T-cell (primary cell): ENCODE measurements at regions of chr11 and their contacts with region 1.

Region 1: GRCh38 chr11:3849297-3849874 is 6.1 kb upstream of the STIM1 start:
- DNase-seq: peak in 16 of 35 experiments; percentile 31 to 82 (median 46)
- ATAC-seq: peak; percentile 49 to 68 (median 64)
- H3K4me3 ChIP-seq: no peak overlapping the region
- H3K4me3 Mint-ChIP-seq: no peak overlapping the region
- H3K27ac ChIP-seq: no peak overlapping the region
- H3K27ac Mint-ChIP-seq: peak overlapping the region; percentile 19 to 23
- H3K4me1 ChIP-seq: peaks cover 25 to 37% of the 10 kb centered on the region in 2 experiments
- H3K4me1 Mint-ChIP-seq: peaks cover 41 to 58% (median 42%) of the 10 kb centered on the region in 3 donors
- H3K27me3 ChIP-seq: no peaks in the 10 kb centered on the region
- H3K27me3 Mint-ChIP-seq: no peaks in the 10 kb centered on the region

Region 2: DNA sequence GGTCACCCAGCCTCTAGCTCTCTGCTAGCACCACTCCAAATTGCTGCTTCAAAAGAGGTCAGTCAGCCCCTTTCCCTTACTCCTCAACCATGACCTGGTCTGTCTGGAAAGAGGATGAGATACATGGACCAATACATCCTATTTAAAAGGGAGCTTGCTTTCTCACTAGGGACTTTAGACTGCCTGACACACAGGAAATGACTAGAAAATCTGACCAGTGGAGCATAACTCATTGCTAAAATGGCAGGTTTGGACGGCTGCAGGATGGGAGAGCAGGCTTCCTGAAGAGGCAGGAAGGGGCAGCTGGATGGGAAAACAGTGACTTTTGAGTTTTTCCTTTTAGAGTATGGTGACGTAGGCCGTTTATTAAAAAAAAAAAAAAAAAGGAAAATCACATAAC is 31.3 kb after region 1 on chr11:
- CTCF ChIA-PET with region 1: interaction called, 9 to 27 read pairs
- POLR2A ChIA-PET with region 1: interaction called in 1 of 2 experiments, 4 read pairs
- DNase-seq: no peak
- ATAC-seq: no peak
- H3K4me3 ChIP-seq: no peak overlapping the region
- H3K4me3 Mint-ChIP-seq: peak overlapping the region in 2 of 3 donors; percentile 21 to 44
- H3K27ac ChIP-seq: peak overlapping the region; percentile 48
- H3K27ac Mint-ChIP-seq: peak overlapping the region; percentile 79 to 85
- H3K4me1 ChIP-seq: peaks cover 24 to 30% of the 10 kb centered on the region in 2 experiments
- H3K4me1 Mint-ChIP-seq: peaks cover 75 to 86% (median 78%) of the 10 kb centered on the region in 3 donors
- H3K27me3 ChIP-seq: no peaks in the 10 kb centered on the region
- H3K27me3 Mint-ChIP-seq: no peaks in the 10 kb centered on the region

Region 3: GRCh38 chr11:4065601-4066377 is 216.4 kb after region 1 on chr11:
- CTCF ChIA-PET with region 1: interaction called in 1 of 2 experiments, 28 read pairs
- POLR2A ChIA-PET with region 1: interaction called in 1 of 2 experiments, 4 read pairs
- DNase-seq: no peak
- ATAC-seq: no peak
- H3K4me3 ChIP-seq: no peak overlapping the region
- H3K4me3 Mint-ChIP-seq: no peak overlapping the region
- H3K27ac ChIP-seq: peak overlapping the region; percentile 17
- H3K27ac Mint-ChIP-seq: peak overlapping the region; percentile 84 to 86
- H3K4me1 ChIP-seq: peaks cover 12 to 45% of the 10 kb centered on the region in 2 experiments
- H3K4me1 Mint-ChIP-seq: peaks cover 68 to 71% (median 70%) of the 10 kb centered on the region in 3 donors
- H3K27me3 ChIP-seq: no peaks in the 10 kb centered on the region
- H3K27me3 Mint-ChIP-seq: no peaks in the 10 kb centered on the region

Region 4: GRCh38 chr11:4619514-4619913 is 770.1 kb after region 1 on chr11:
- CTCF ChIA-PET with region 1: no interaction called
- POLR2A ChIA-PET with region 1: no interaction called
- DNase-seq: no peak
- ATAC-seq: no peak
- H3K4me3 ChIP-seq: no peak overlapping the region
- H3K4me3 Mint-ChIP-seq: no peak overlapping the region
- H3K27ac ChIP-seq: no peak overlapping the region
- H3K27ac Mint-ChIP-seq: no peak overlapping the region
- H3K4me1 ChIP-seq: no peaks in the 10 kb centered on the region
- H3K4me1 Mint-ChIP-seq: no peaks in the 10 kb centered on the region
- H3K27me3 ChIP-seq: peaks cover 0 to 3% of the 10 kb centered on the region in 2 experiments
- H3K27me3 Mint-ChIP-seq: peaks cover 26 to 28% of the 10 kb centered on the region in 2 donors